AG04449 (cell line): ENCODE measurements at regions of chr12 and their contacts with region 1.

Region 1: GRCh38 chr12:100672075-100672592 is 98.7 kb downstream of the GAS2L3 start:
- DNase-seq: no peak
- H3K4me3 ChIP-seq: no peak overlapping the region
- CTCF ChIP-seq: peak; percentile 56

Region 2: GRCh38 chr12:100573292-100574186 is 98.6 kb before region 1 on chr12 and contains the start of gene GAS2L3:
- CTCF ChIA-PET with region 1: no interaction called
- POLR2A ChIA-PET with region 1: no interaction called
- DNase-seq: no peak
- H3K4me3 ChIP-seq: peak within 1 kb of the TSS; percentile 86
- CTCF ChIP-seq: no peak

Region 3: DNA sequence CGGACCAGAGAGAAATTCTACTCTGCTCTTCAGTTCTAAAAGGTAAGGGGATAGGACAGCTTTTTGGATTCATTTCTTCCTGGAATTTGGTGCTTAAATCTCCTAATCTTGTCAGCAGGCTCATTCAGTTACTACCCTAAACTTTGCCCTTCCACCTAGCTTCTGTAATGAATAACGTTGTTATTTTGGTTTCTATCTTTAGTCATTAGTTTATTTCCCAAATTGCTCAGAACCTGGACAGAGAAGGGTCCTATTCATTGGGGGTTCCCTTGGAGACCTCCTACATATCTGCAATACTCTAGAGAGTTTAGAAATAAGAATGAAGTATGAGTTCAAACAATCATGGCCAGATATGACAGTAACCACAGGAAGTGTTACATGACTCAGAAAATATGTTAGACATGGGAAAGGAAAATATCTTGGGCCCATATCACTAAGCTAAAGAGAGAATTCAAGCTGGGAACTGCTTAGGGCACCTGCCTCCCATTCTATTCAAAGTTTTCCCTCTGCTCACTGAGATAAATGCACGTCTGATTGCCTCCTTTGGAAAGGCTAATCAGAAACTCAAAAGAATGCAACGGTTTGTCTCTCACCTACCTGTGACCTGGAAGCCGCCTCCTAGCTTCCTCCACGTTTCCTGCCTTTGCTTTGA is 10.7 kb before region 1 on chr12:
- CTCF ChIA-PET with region 1: interaction called, 23 read pairs
- POLR2A ChIA-PET with region 1: no interaction called
- DNase-seq: peak; percentile 16
- H3K4me3 ChIP-seq: no peak overlapping the region
- CTCF ChIP-seq: no peak